Activated B cell treated with CpG ODN at 0.5 μM for 24 hours (primary cell): ENCODE measurements at regions of chr2 and their contacts with region 1.

Region 1: GRCh38 chr2:196171248-196171871 is at the start of gene STK17B:
- DNase-seq: peak; percentile 88
- ATAC-seq: peak; percentile 64
- H3K4me3 Mint-ChIP-seq: peak within 1 kb of the TSS; percentile 99
- H3K27ac Mint-ChIP-seq: peak within 1 kb of the TSS; percentile 98
- H3K4me1 Mint-ChIP-seq: peaks cover 60% of the 10 kb centered on the region
- H3K27me3 Mint-ChIP-seq: no peaks in the 10 kb centered on the region
- CTCF ChIP-seq: no peak
- total RNA-seq, gene STK17B: 203 and 226 TPM in 2 replicates

Region 2: DNA sequence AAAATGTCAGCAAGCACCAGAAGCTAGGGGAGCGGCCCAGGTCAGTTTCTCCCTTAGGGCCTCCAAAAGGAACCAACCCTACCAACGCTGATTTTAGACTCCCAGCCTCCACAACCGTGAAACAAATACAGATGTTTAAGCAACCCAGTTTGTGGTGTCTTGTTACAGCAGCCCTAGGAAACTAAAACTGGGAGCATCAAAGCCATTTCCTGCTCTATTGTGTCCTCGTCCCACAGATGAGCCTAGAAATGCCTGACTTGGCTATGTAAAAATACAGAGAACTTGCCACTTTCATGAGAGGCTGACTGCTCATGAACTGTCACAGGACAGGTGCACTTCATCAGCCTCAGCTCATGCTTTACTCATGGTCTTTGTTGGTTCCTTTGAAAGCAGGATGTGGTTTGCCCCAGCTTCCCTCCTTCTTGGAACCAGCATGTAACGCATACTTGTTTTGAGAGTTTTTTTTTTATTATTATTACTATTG is 611.9 kb before region 1 on chr2:
- CTCF ChIA-PET with region 1: no interaction called
- POLR2A ChIA-PET with region 1: interaction called, 5 read pairs
- intact Hi-C with region 1: loop called (anchors 5 kb)
- DNase-seq: no peak
- ATAC-seq: peak; percentile 70
- H3K4me3 Mint-ChIP-seq: peak overlapping the region; percentile 32
- H3K27ac Mint-ChIP-seq: peak overlapping the region; percentile 98
- H3K4me1 Mint-ChIP-seq: peaks cover 62% of the 10 kb centered on the region
- H3K27me3 Mint-ChIP-seq: no peaks in the 10 kb centered on the region
- CTCF ChIP-seq: no peak

Region 3: DNA sequence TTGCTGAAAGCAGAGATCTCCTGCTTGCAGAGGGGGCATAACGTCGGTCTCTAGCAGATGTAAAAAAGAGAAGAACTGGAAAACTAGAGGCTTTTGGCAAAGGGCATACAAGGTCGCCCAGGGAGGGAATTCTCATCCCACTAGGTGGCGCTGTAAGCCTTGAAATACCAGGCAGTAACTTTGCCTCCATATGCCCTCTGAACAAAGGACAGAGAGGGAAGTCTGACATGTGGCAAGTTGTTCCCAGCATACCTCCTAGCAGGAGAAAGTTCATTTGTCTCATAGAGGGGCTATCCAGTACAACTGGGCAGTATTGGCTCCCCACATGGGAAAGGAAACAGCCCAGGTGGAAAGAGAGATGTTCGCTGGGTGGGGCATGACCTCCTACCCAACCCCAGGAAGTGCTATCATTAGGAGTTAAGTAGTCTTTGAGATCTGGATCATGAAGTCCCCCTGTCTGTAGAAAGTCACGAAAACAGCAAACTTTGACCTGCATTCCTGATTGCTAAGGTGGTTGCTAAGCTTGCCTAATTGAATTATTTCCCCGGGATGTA is 39.9 kb before region 1 on chr2:
- CTCF ChIA-PET with region 1: no interaction called
- POLR2A ChIA-PET with region 1: interaction called, 7 read pairs
- intact Hi-C with region 1: loop called (anchors 5 kb)
- DNase-seq: no peak
- ATAC-seq: peak; percentile 44
- H3K4me3 Mint-ChIP-seq: no peak overlapping the region
- H3K27ac Mint-ChIP-seq: peak overlapping the region; percentile 46
- H3K4me1 Mint-ChIP-seq: no peaks in the 10 kb centered on the region
- H3K27me3 Mint-ChIP-seq: no peaks in the 10 kb centered on the region
- CTCF ChIP-seq: no peak

Region 4: DNA sequence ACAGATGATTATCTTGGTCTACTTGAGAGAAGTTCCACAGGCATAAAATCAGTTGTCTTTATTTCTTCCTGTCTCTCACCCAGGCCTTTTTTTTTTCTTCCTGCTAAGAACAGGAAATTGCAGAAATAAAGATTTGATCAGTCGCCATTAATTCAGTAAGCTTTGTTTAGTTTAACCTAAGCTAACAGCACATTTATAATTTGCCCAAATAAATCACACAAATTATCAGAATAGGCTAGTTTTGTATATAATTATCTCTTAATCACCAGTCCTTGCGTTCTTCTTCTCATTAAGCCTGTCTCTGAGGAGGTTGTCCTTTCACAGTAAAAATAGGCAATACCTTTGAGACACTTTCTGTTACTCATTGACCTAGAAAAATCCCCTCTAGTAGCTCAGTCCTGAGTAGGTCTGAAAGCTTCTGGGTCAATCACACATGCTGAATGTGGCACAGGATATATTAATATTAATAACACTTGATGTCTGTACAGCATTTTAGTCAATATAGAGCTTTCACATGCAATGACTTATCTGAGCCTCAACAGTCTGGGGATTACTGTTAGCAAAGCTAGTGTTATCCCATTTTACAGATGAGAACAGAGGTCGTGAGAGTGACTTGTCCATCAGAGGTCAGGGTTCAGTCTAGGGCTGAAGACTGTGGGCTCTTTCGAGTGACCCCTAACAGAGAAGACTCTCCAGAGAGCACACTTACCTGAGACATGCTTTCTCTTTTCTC is 11.2 kb after region 1 on chr2:
- CTCF ChIA-PET with region 1: interaction called, 3 read pairs
- POLR2A ChIA-PET with region 1: interaction called, 81 read pairs
- intact Hi-C with region 1: no loop called
- DNase-seq: no peak
- ATAC-seq: peak; percentile 83
- H3K4me3 Mint-ChIP-seq: peak overlapping the region; percentile 67
- H3K27ac Mint-ChIP-seq: peak overlapping the region; percentile 95
- H3K4me1 Mint-ChIP-seq: peaks cover 77% of the 10 kb centered on the region
- H3K27me3 Mint-ChIP-seq: no peaks in the 10 kb centered on the region
- CTCF ChIP-seq: no peak

Region 5: GRCh38 chr2:196225213-196225612 is 53.9 kb after region 1 on chr2:
- CTCF ChIA-PET with region 1: interaction called, 4 read pairs
- POLR2A ChIA-PET with region 1: interaction called, 25 read pairs
- intact Hi-C with region 1: no loop called
- DNase-seq: no peak
- ATAC-seq: no peak
- H3K4me3 Mint-ChIP-seq: no peak overlapping the region
- H3K27ac Mint-ChIP-seq: peak overlapping the region; percentile 8
- H3K4me1 Mint-ChIP-seq: peaks cover 61% of the 10 kb centered on the region
- H3K27me3 Mint-ChIP-seq: no peaks in the 10 kb centered on the region
- CTCF ChIP-seq: no peak

Region 6: DNA sequence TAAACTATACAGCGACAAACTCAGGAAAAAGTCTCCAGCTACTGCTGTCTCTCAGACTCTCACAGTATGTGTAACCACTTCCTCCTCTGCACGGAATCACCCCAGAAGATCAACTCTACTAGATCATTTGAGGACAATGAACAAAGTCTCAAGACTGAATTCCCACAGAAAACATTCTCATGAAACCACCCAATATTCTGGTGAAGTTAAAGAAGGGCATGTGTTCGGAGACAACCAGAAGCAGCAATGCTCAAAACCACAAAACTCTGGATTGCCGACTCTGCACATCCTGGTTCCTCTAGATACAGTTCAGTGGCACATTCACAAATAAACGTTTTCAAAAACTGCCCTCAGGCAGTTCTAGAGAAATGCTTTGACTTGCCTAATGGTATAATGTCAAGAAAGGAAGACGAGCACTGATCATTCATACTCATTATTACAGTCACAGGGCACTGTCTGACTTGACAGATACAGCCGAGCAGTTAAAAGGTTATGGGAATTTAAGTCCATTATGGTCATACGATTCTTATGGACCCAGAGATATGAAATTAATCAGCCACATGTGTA is 91.9 kb after region 1 on chr2:
- CTCF ChIA-PET with region 1: interaction called, 6 read pairs
- POLR2A ChIA-PET with region 1: interaction called, 43 read pairs
- intact Hi-C with region 1: loop called (anchors 1 kb)
- DNase-seq: no peak
- ATAC-seq: peak; percentile 80
- H3K4me3 Mint-ChIP-seq: peak overlapping the region; percentile 71
- H3K27ac Mint-ChIP-seq: peak overlapping the region; percentile 91
- H3K4me1 Mint-ChIP-seq: peaks cover 69% of the 10 kb centered on the region
- H3K27me3 Mint-ChIP-seq: no peaks in the 10 kb centered on the region
- CTCF ChIP-seq: no peak

Region 7: DNA sequence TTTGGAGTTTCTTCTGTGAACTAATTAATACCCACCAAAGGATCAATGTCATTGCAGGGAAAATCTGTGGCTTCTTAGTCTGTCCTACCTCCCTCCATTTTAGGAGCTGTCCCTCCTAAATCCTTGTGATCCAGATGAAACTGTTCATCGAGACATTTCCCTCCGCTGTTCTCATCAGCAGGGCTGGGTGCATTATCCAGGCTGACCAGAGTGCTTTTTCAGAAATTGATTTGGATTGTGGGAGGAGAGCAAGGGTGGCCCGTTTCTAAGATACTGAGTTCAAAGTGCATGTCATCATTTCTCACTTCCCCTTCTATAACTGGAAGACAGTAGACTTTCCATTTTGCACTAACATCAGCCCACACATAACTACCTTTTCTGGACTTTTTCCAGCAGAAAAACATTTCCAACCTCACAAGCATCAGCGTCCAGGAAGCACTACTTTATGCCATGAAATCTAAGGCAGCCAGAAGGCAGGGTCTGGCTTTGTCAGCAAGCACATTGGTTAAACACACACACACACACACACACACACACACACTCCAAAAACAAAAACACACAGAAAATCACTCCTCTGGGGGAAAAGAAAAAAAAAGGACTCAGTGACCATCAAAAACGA is 1045.1 kb after region 1 on chr2:
- CTCF ChIA-PET with region 1: no interaction called
- POLR2A ChIA-PET with region 1: interaction called, 4 read pairs
- intact Hi-C with region 1: loop called (anchors 10 kb)
- DNase-seq: no peak
- ATAC-seq: peak; percentile 71
- H3K4me3 Mint-ChIP-seq: peak overlapping the region; percentile 72
- H3K27ac Mint-ChIP-seq: peak overlapping the region; percentile 98
- H3K4me1 Mint-ChIP-seq: peaks cover 91% of the 10 kb centered on the region
- H3K27me3 Mint-ChIP-seq: no peaks in the 10 kb centered on the region
- CTCF ChIP-seq: no peak